HCT116 (cell line): ENCODE measurements at regions of chr7 and their contacts with region 1.

Region 1: GRCh38 chr7:80722616-80723141 is 84.2 kb downstream of the CD36 start:
- DNase-seq: peak; percentile 98
- ATAC-seq: peak; percentile 93
- H3K4me3 ChIP-seq: peak overlapping the region; percentile 18 to 37
- H3K27ac ChIP-seq: peak overlapping the region; percentile 94
- H3K4me1 ChIP-seq: peaks cover 31 to 48% of the 10 kb centered on the region in 2 experiments
- H3K27me3 ChIP-seq: no peaks in the 10 kb centered on the region
- CTCF ChIP-seq: no peak
- POLR2A ChIP-seq: no peak
- RAD21 ChIP-seq: peak; percentile 40; the same call in 1 of the 2 replicates

Region 2: DNA sequence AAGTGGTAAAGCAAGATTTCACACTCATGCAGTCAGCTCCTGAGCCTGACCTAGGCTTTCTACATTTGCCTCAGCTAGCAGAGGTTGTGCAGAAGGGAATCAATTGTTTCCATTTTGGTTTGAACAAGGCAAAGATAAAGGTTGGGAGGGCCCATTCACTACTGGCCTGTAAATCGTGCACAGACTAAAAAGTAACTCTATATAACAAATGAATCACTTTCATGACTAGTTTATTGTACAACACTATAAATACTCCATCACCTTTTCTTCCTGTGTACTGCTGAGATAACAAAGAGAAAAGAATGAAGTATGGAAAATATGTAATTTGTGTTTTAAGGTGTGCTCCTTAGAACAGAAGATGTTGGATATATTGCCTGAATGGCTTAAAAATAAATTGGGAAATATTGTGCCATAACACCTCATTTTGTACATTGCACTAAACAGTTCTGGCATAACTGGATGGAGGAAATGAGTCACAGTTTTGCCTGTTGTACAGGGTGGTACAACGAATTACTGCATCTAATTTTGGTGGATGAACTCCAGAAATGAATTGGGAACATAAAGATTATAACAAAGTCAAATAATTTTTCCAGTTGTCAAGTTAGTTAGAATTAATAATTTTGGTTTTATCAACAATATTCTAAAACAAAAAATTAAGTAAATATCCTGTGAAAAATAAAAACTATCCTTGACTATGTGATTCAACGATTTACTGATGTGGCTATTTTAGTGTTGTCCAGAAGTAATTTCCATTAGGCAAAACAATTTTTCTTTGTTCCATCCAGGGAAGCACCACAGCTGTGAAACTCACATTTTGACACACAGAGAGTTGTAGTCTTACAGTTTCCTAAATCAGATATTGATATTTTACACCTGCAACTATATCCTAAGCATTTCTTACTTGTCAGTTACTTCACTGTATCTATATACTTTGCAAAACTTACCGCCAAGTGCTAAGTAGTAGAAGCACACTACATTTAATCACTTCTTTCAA is 178.2 kb after region 1 on chr7:
- CTCF ChIA-PET with region 1: no interaction called
- POLR2A ChIA-PET with region 1: no interaction called
- RAD21 ChIA-PET with region 1: no interaction called
- intact Hi-C with region 1: loop called (anchors 10 kb)
- DNase-seq: no peak
- ATAC-seq: peak; percentile 40; the same call in 1 of the 2 replicates
- H3K4me3 ChIP-seq: no peak overlapping the region
- H3K27ac ChIP-seq: peak overlapping the region; percentile 9; the same call in 1 of the 2 replicates
- H3K4me1 ChIP-seq: peaks cover 26 to 47% of the 10 kb centered on the region in 2 experiments
- H3K27me3 ChIP-seq: no peaks in the 10 kb centered on the region
- CTCF ChIP-seq: no peak
- POLR2A ChIP-seq: no peak
- RAD21 ChIP-seq: no peak

Region 3: DNA sequence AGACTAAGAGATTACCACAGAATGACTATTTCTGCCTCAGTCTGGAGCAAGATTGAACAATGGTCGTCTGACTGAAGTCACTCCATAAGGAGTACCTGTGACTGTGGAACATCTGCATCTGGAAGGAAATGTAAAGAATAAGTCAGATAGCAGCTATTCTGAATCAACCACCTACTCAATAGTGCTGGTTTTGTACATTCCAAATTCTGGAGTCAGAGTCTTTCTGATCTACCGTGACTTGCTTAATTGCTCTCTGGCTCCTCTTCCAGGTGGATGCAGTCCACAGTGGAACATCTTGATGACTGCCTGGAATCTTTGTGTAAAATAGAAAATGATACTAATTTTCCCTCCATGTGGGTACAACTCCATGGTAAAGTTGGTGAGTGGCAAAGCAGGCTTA is 352.5 kb after region 1 on chr7:
- CTCF ChIA-PET with region 1: no interaction called
- POLR2A ChIA-PET with region 1: no interaction called
- RAD21 ChIA-PET with region 1: no interaction called
- intact Hi-C with region 1: loop called (anchors 10 kb)
- DNase-seq: peak; percentile 31
- ATAC-seq: peak; percentile 61
- H3K4me3 ChIP-seq: no peak overlapping the region
- H3K27ac ChIP-seq: no peak overlapping the region; the same call in 1 of the 2 replicates
- H3K4me1 ChIP-seq: peaks cover 22 to 30% of the 10 kb centered on the region in 2 experiments
- H3K27me3 ChIP-seq: no peaks in the 10 kb centered on the region
- CTCF ChIP-seq: no peak
- POLR2A ChIP-seq: no peak
- RAD21 ChIP-seq: peak; percentile 33; the same call in 1 of the 2 replicates

Region 4: GRCh38 chr7:81333004-81333403 is 610.3 kb after region 1 on chr7:
- CTCF ChIA-PET with region 1: no interaction called
- POLR2A ChIA-PET with region 1: no interaction called
- RAD21 ChIA-PET with region 1: no interaction called
- intact Hi-C with region 1: no loop called
- DNase-seq: no peak
- ATAC-seq: no peak
- H3K4me3 ChIP-seq: no peak overlapping the region
- H3K27ac ChIP-seq: no peak overlapping the region
- H3K4me1 ChIP-seq: no peaks in the 10 kb centered on the region
- H3K27me3 ChIP-seq: no peaks in the 10 kb centered on the region
- CTCF ChIP-seq: no peak
- POLR2A ChIP-seq: no peak
- RAD21 ChIP-seq: no peak